ENCODE measurements at regions of chr18 and their contacts with region 1.

Region 1: GRCh38 chr18:59899298-59900221 is at the start of gene PMAIP1:
- DNase-seq: peak; percentile 60 to 87 (median 69)
- ATAC-seq: peak; percentile 91
- H3K4me3 ChIP-seq: peak within 1 kb of the TSS; percentile 66
- H3K4me3 Mint-ChIP-seq: peak within 1 kb of the TSS; percentile 92 to 99 (median 98)
- H3K27ac ChIP-seq: peak within 1 kb of the TSS; percentile 86
- H3K27ac Mint-ChIP-seq: peak within 1 kb of the TSS; percentile 88 to 95 (median 94)
- H3K4me1 ChIP-seq: peaks cover 14 to 21% of the 10 kb centered on the region in 2 donors
- H3K4me1 Mint-ChIP-seq: peaks cover 22 to 52% (median 34%) of the 10 kb centered on the region in 7 donors
- H3K27me3 ChIP-seq: no peaks in the 10 kb centered on the region
- H3K27me3 Mint-ChIP-seq: no peaks in the 10 kb centered on the region
- total RNA-seq, gene PMAIP1: 5.8 to 95.1 (median 22.8) TPM

Region 2: GRCh38 chr18:59358712-59359575 is 540.6 kb before region 1 on chr18 and contains the start of gene LMAN1:
- CTCF ChIA-PET with region 1: interaction called, 3 read pairs
- POLR2A ChIA-PET with region 1: no interaction called
- intact Hi-C with region 1: loop called (anchors 1 kb)
- DNase-seq: peak; percentile 73 to 98 (median 83)
- ATAC-seq: peak; percentile 97
- H3K4me3 ChIP-seq: peak within 1 kb of the TSS; percentile 81
- H3K4me3 Mint-ChIP-seq: peak within 1 kb of the TSS; percentile 88 to 99 (median 96)
- H3K27ac ChIP-seq: peak within 1 kb of the TSS; percentile 86
- H3K27ac Mint-ChIP-seq: peak within 1 kb of the TSS; percentile 90 to 98 (median 93)
- H3K4me1 ChIP-seq: peaks cover 3 to 20% of the 10 kb centered on the region in 2 donors
- H3K4me1 Mint-ChIP-seq: peaks cover 11 to 45% (median 39%) of the 10 kb centered on the region in 7 donors
- H3K27me3 ChIP-seq: no peaks in the 10 kb centered on the region
- H3K27me3 Mint-ChIP-seq: peaks cover 0 to 9% (median 0%) of the 10 kb centered on the region in 5 donors
- total RNA-seq, gene LMAN1: 34.6 to 120 (median 46.3) TPM

Region 3: DNA sequence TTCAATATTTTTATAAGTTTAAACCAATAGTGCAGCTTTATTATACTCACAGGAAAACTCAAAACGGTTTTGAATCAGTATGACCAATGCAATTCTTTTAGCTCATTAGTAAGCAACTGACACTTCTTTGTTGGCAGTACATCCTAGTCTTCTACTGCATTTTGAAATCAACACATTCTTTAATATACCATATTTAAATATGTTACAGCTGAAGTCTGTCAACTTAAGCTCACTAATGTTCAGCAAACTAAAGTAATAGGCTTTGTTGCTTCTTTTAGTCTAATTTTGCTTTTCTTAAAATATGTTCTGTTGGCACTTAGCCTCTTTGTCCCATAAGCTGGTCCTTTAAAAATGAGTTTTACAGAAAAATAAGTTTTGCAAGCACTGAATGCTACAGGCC is 146.9 kb before region 1 on chr18:
- CTCF ChIA-PET with region 1: no interaction called
- POLR2A ChIA-PET with region 1: no interaction called
- intact Hi-C with region 1: no loop called
- DNase-seq: no peak
- ATAC-seq: no peak
- H3K4me3 ChIP-seq: no peak overlapping the region
- H3K4me3 Mint-ChIP-seq: no peak overlapping the region
- H3K27ac ChIP-seq: no peak overlapping the region
- H3K27ac Mint-ChIP-seq: no peak overlapping the region
- H3K4me1 ChIP-seq: no peaks in the 10 kb centered on the region
- H3K4me1 Mint-ChIP-seq: no peaks in the 10 kb centered on the region
- H3K27me3 ChIP-seq: no peaks in the 10 kb centered on the region
- H3K27me3 Mint-ChIP-seq: peaks cover 2 to 12% (median 10%) of the 10 kb centered on the region in 5 donors

Region 4: DNA sequence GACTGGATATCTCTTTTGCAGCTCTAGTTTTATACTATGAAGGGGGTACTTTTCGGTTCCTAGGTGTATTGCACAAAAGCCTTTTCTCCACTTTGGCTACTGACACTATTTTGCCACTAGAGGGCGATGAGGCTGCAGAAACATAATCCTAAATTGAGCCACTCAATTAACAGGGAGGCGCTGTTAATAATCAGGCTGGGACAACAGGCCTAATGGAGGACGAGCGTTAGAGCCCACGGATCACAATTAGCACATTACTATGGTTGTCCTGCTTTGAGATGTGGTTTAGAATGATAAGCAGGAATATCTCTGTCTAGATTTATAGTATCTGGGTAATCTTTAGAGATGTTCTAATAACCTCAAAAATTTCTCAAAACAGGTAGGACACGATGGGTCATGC is 62.0 kb before region 1 on chr18:
- CTCF ChIA-PET with region 1: interaction called, 3 read pairs
- POLR2A ChIA-PET with region 1: no interaction called
- intact Hi-C with region 1: loop called (anchors 1 kb)
- DNase-seq: peak in 8 of 9 donors; percentile 10 to 43 (median 26)
- ATAC-seq: peak; percentile 75
- H3K4me3 ChIP-seq: no peak overlapping the region
- H3K4me3 Mint-ChIP-seq: no peak overlapping the region
- H3K27ac ChIP-seq: no peak overlapping the region
- H3K27ac Mint-ChIP-seq: no peak overlapping the region
- H3K4me1 ChIP-seq: no peaks in the 10 kb centered on the region
- H3K4me1 Mint-ChIP-seq: peaks cover 0 to 7% (median 0%) of the 10 kb centered on the region in 7 donors
- H3K27me3 ChIP-seq: no peaks in the 10 kb centered on the region
- H3K27me3 Mint-ChIP-seq: peaks cover 0 to 25% (median 0%) of the 10 kb centered on the region in 5 donors

Region 5: DNA sequence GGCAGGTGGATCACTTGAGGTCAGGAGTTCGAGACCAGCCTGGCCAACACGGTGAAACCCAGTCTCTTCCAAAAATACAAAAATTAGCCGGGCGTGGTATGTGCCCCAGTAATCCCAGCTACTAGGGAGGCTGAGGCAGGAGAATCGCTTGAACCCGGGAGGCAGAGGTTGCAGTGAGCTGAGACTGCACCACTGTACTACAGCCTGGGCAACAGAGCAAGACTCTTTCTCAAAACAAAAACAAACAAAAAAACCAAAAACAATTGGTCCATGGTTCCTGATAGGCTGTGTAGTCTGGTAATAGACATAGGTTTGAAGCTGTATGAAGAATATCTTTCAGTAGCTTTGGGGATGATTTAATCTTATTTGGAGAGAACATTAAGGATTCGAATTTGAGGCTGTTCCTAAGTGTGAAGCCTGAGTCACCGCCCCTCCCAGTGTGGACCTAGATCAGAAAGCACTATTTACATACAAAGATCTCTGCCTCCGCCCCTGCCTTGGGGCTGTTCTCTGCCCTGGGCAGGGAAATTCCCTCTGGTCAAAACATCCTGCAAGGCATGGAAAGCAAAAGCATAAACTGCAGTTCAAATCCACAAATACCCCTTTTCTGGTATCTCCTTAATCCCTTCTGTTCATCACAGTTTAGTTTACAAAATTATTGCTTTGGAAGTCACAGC is 52.6 kb before region 1 on chr18:
- CTCF ChIA-PET with region 1: interaction called, 3 read pairs
- POLR2A ChIA-PET with region 1: no interaction called
- intact Hi-C with region 1: loop called in 1 of 2 experiments (anchors 1 kb)
- DNase-seq: peak in 1 of 9 donors; percentile 66
- ATAC-seq: no peak
- H3K4me3 ChIP-seq: no peak overlapping the region
- H3K4me3 Mint-ChIP-seq: peak overlapping the region in 1 of 10 donors; percentile 65
- H3K27ac ChIP-seq: no peak overlapping the region
- H3K27ac Mint-ChIP-seq: peak overlapping the region in 1 of 9 donors; percentile 73
- H3K4me1 ChIP-seq: no peaks in the 10 kb centered on the region
- H3K4me1 Mint-ChIP-seq: peaks cover 0 to 20% (median 0%) of the 10 kb centered on the region in 7 donors
- H3K27me3 ChIP-seq: no peaks in the 10 kb centered on the region
- H3K27me3 Mint-ChIP-seq: peaks cover 0 to 2% (median 0%) of the 10 kb centered on the region in 5 donors

Region 6: GRCh38 chr18:59885579-59886163 is 13.9 kb before region 1 on chr18:
- CTCF ChIA-PET with region 1: no interaction called
- POLR2A ChIA-PET with region 1: no interaction called
- intact Hi-C with region 1: loop called (anchors 1 to 2 kb)
- DNase-seq: peak in 1 of 9 donors; percentile 32
- ATAC-seq: peak; percentile 62
- H3K4me3 ChIP-seq: no peak overlapping the region
- H3K4me3 Mint-ChIP-seq: peak overlapping the region in 5 of 10 donors; percentile 6 to 66 (median 8)
- H3K27ac ChIP-seq: no peak overlapping the region
- H3K27ac Mint-ChIP-seq: peak overlapping the region in 5 of 9 donors; percentile 4 to 76 (median 32)
- H3K4me1 ChIP-seq: peaks cover 8 to 9% of the 10 kb centered on the region in 2 donors
- H3K4me1 Mint-ChIP-seq: peaks cover 10 to 50% (median 27%) of the 10 kb centered on the region in 7 donors
- H3K27me3 ChIP-seq: no peaks in the 10 kb centered on the region
- H3K27me3 Mint-ChIP-seq: no peaks in the 10 kb centered on the region

Region 7: GRCh38 chr18:59957971-59958595 is 58.5 kb after region 1 on chr18:
- CTCF ChIA-PET with region 1: no interaction called
- POLR2A ChIA-PET with region 1: interaction called, 3 read pairs
- intact Hi-C with region 1: loop called in 1 of 2 experiments (anchors 5 kb)
- DNase-seq: no peak
- ATAC-seq: no peak
- H3K4me3 ChIP-seq: no peak overlapping the region
- H3K4me3 Mint-ChIP-seq: no peak overlapping the region
- H3K27ac ChIP-seq: no peak overlapping the region
- H3K27ac Mint-ChIP-seq: no peak overlapping the region
- H3K4me1 ChIP-seq: no peaks in the 10 kb centered on the region
- H3K4me1 Mint-ChIP-seq: peaks cover 0 to 26% (median 0%) of the 10 kb centered on the region in 7 donors
- H3K27me3 ChIP-seq: no peaks in the 10 kb centered on the region
- H3K27me3 Mint-ChIP-seq: peaks cover 1 to 19% (median 10%) of the 10 kb centered on the region in 5 donors

Region 8: GRCh38 chr18:59988098-59988706 is 88.6 kb after region 1 on chr18:
- CTCF ChIA-PET with region 1: no interaction called
- POLR2A ChIA-PET with region 1: no interaction called
- intact Hi-C with region 1: loop called in 1 of 2 experiments (anchors 5 kb)
- DNase-seq: peak in 5 of 9 donors; percentile 19 to 37 (median 24)
- ATAC-seq: peak; percentile 54
- H3K4me3 ChIP-seq: no peak overlapping the region
- H3K4me3 Mint-ChIP-seq: no peak overlapping the region
- H3K27ac ChIP-seq: no peak overlapping the region
- H3K27ac Mint-ChIP-seq: no peak overlapping the region
- H3K4me1 ChIP-seq: no peaks in the 10 kb centered on the region
- H3K4me1 Mint-ChIP-seq: peaks cover 0 to 2% (median 0%) of the 10 kb centered on the region in 7 donors
- H3K27me3 ChIP-seq: no peaks in the 10 kb centered on the region
- H3K27me3 Mint-ChIP-seq: peaks cover 24 to 28% (median 27%) of the 10 kb centered on the region in 5 donors

Measured in naive thymus-derived CD4-positive, alpha-beta T cell (primary cell).